A673 (cell line): ENCODE measurements at regions of chr12 and their contacts with region 1.

Region 1: DNA sequence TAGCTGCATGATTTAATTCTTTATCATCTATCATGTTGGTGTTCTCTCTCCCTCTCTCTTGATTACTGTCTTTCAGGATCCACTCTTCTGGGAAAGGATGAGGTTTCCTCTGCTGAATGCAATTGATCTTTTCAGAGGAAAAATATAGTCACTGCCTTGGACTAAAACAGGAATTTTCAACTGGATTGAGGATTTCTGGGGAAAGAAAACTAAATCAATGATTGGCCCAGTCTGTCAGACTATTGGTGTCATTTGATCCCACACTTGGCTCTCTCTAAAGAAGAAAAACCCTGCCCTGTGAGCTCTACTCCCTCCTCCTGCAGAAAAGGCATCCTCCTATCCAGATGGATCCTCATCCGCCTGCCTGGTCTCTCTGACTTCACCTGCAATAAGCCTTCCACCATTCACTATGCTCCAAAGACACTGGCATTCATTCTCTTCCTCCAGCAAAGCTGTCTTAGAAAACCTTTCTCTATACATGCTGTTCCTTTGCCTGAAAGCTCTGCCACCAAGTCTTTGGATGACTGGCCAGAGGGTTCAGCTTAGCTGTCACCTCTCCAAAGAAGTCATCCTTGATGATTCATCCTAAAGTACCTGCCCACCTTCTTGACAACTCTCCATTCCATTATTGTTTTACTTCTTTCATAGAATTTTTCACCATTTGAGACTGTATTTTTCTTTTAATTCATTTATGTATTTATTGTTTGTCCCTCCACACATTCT is 127.7 kb upstream of the CAND1 start:
- DNase-seq: no peak
- H3K4me3 ChIP-seq: no peak overlapping the region
- H3K27ac ChIP-seq: no peak overlapping the region
- H3K4me1 ChIP-seq: no peaks in the 10 kb centered on the region
- H3K27me3 ChIP-seq: peaks cover 12% of the 10 kb centered on the region
- CTCF ChIP-seq: no peak

Region 2: GRCh38 chr12:67069451-67070306 is 71.8 kb before region 1 on chr12:
- CTCF ChIA-PET with region 1: interaction called, 17 read pairs
- POLR2A ChIA-PET with region 1: no interaction called
- intact Hi-C with region 1: no loop called
- DNase-seq: peak; percentile 41
- H3K4me3 ChIP-seq: peak overlapping the region; percentile 43
- H3K27ac ChIP-seq: no peak overlapping the region
- H3K4me1 ChIP-seq: no peaks in the 10 kb centered on the region
- H3K27me3 ChIP-seq: peaks cover 52% of the 10 kb centered on the region
- CTCF ChIP-seq: no peak